Natural killer cell (primary cell): ENCODE measurements at regions of chr6 and their contacts with region 1.

Region 1: DNA sequence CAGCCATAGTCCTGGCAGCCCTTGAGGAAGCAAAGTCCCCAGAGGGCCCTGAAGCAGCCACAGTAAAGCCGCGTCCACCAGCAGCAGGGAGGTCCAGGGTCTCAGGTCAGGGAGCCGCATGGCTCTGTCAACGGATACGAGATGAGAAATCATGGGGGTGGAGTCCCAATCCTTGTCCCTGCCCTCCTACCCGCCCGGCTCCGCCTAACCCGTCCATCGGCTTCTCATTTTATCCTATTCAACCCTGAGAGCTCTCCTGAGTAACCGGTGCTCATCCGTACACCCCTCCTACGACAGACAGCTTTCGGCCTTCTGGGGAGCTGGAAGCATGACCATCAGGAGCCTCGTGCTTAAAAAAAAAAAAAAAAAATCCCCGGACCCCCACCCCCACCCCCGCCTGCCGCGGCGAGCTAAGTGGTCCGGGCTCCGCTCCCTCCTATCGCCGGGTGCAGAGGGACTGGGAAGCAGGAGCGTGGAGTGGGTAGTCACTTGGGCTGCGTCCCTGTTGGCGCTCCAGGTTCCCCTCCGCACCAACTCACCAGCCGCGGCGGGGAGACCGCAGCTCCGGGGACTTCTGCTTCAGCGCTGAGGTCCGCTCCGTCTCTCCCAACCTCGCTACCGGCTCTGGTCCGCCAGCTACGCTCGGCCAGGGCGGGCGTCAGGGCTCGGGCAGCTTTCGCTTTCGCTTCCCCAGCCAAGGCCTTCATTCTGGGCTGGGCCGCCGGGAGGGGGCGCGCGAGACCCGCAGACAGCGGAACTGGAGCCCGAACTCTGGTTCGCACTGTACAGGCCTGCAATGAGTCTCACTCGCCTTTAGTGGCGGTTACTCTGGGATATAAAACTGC is at the start of gene TAP2:
- DNase-seq: peak; percentile 97 to 99
- ATAC-seq: peak; percentile 88 to 99 (median 88)
- H3K4me3 ChIP-seq: peak within 1 kb of the TSS; percentile 63
- H3K4me3 Mint-ChIP-seq: peak within 1 kb of the TSS; percentile 95
- H3K27ac ChIP-seq: peak within 1 kb of the TSS; percentile 80
- H3K27ac Mint-ChIP-seq: peak within 1 kb of the TSS; percentile 96 to 100
- H3K4me1 ChIP-seq: peaks cover 46% of the 10 kb centered on the region
- H3K4me1 Mint-ChIP-seq: peaks cover 69 to 84% of the 10 kb centered on the region in 2 donors
- H3K27me3 ChIP-seq: no peaks in the 10 kb centered on the region
- H3K27me3 Mint-ChIP-seq: no peaks in the 10 kb centered on the region
- CTCF ChIP-seq: peak; percentile 91
- total RNA-seq, gene TAP2: 162 to 221 (median 209) TPM

Region 2: DNA sequence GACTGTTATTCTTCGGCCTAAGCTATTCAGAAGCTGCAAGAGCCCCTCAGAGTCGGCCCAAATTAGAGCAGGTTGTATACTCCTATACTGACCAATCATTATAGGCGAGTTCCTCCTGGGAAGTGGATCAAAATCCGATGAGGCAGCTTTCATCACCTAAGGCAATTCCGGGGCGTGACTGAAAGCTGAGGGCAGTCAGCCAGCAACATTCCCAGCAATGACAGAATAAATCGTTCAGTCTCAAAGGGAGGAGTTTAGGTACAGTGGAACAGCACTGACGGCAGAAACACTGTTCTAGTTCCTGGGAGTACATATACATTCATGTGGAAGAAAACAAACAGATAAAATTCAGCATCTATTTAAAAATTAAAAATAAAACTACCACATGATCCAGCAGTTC is 85.8 kb before region 1 on chr6:
- intact Hi-C with region 1: no loop called
- DNase-seq: no peak
- ATAC-seq: no peak
- H3K4me3 ChIP-seq: no peak overlapping the region
- H3K4me3 Mint-ChIP-seq: no peak overlapping the region
- H3K27ac ChIP-seq: no peak overlapping the region
- H3K27ac Mint-ChIP-seq: no peak overlapping the region
- H3K4me1 ChIP-seq: no peaks in the 10 kb centered on the region
- H3K4me1 Mint-ChIP-seq: no peaks in the 10 kb centered on the region
- H3K27me3 ChIP-seq: peaks cover 5% of the 10 kb centered on the region
- H3K27me3 Mint-ChIP-seq: peaks cover 30 to 50% of the 10 kb centered on the region in 2 donors
- CTCF ChIP-seq: no peak

Region 3: GRCh38 chr6:32853541-32854375 is 15.4 kb after region 1 on chr6 and contains the starts of genes PSMB9 and TAP1:
- intact Hi-C with region 1: loop called (anchors 1 kb)
- DNase-seq: peak; percentile 90 to 98
- ATAC-seq: peak; percentile 76 to 92 (median 80)
- H3K4me3 ChIP-seq: peak within 1 kb of the TSS; percentile 95
- H3K4me3 Mint-ChIP-seq: peak within 1 kb of the TSS; percentile 99
- H3K27ac ChIP-seq: peak within 1 kb of the TSS; percentile 99
- H3K27ac Mint-ChIP-seq: peak within 1 kb of the TSS; percentile 100
- H3K4me1 ChIP-seq: peaks cover 65% of the 10 kb centered on the region
- H3K4me1 Mint-ChIP-seq: peaks cover 73 to 84% of the 10 kb centered on the region in 2 donors
- H3K27me3 ChIP-seq: no peaks in the 10 kb centered on the region
- H3K27me3 Mint-ChIP-seq: no peaks in the 10 kb centered on the region
- CTCF ChIP-seq: peak; percentile 78
- total RNA-seq, gene PSMB9: 112 to 190 (median 182) TPM
- total RNA-seq, gene TAP1: 134 to 193 (median 179) TPM

Region 4: GRCh38 chr6:33082702-33083101 is 244.4 kb after region 1 on chr6:
- intact Hi-C with region 1: no loop called
- DNase-seq: peak in 1 of 2 donors; percentile 35
- ATAC-seq: peak; percentile 52 to 75 (median 75)
- H3K4me3 ChIP-seq: no peak overlapping the region
- H3K4me3 Mint-ChIP-seq: no peak overlapping the region
- H3K27ac ChIP-seq: no peak overlapping the region
- H3K27ac Mint-ChIP-seq: no peak overlapping the region
- H3K4me1 ChIP-seq: peaks cover 31% of the 10 kb centered on the region
- H3K4me1 Mint-ChIP-seq: peaks cover 28 to 43% of the 10 kb centered on the region in 2 donors
- H3K27me3 ChIP-seq: no peaks in the 10 kb centered on the region
- H3K27me3 Mint-ChIP-seq: peaks cover 0 to 8% of the 10 kb centered on the region in 2 donors
- CTCF ChIP-seq: peak; percentile 49